ENCODE measurements at regions of chr1 and their contacts with region 1.

Region 1: GRCh38 chr1:244272471-244273261 is 179.0 kb downstream of the ADSS2 start:
- DNase-seq: peak; percentile 80
- ATAC-seq: peak; percentile 90
- H3K4me3 Mint-ChIP-seq: no peak overlapping the region
- H3K27ac Mint-ChIP-seq: no peak overlapping the region
- H3K4me1 Mint-ChIP-seq: peaks cover 9% of the 10 kb centered on the region
- H3K27me3 Mint-ChIP-seq: no peaks in the 10 kb centered on the region

Region 2: GRCh38 chr1:242467556-242468145 is 1805.0 kb before region 1 on chr1:
- CTCF ChIA-PET with region 1: no interaction called
- POLR2A ChIA-PET with region 1: no interaction called
- intact Hi-C with region 1: loop called in 1 of 2 experiments (anchors 5 kb)
- DNase-seq: peak; percentile 44
- ATAC-seq: peak; percentile 49
- H3K4me3 Mint-ChIP-seq: no peak overlapping the region
- H3K27ac Mint-ChIP-seq: no peak overlapping the region
- H3K4me1 Mint-ChIP-seq: no peaks in the 10 kb centered on the region
- H3K27me3 Mint-ChIP-seq: peaks cover 6% of the 10 kb centered on the region

Region 3: GRCh38 chr1:243471754-243472745 is 800.6 kb before region 1 on chr1:
- CTCF ChIA-PET with region 1: no interaction called
- POLR2A ChIA-PET with region 1: no interaction called
- intact Hi-C with region 1: loop called in 1 of 2 experiments (anchors 10 kb)
- DNase-seq: no peak
- ATAC-seq: no peak
- H3K4me3 Mint-ChIP-seq: no peak overlapping the region
- H3K27ac Mint-ChIP-seq: no peak overlapping the region
- H3K4me1 Mint-ChIP-seq: peaks cover 10% of the 10 kb centered on the region
- H3K27me3 Mint-ChIP-seq: no peaks in the 10 kb centered on the region

Region 4: DNA sequence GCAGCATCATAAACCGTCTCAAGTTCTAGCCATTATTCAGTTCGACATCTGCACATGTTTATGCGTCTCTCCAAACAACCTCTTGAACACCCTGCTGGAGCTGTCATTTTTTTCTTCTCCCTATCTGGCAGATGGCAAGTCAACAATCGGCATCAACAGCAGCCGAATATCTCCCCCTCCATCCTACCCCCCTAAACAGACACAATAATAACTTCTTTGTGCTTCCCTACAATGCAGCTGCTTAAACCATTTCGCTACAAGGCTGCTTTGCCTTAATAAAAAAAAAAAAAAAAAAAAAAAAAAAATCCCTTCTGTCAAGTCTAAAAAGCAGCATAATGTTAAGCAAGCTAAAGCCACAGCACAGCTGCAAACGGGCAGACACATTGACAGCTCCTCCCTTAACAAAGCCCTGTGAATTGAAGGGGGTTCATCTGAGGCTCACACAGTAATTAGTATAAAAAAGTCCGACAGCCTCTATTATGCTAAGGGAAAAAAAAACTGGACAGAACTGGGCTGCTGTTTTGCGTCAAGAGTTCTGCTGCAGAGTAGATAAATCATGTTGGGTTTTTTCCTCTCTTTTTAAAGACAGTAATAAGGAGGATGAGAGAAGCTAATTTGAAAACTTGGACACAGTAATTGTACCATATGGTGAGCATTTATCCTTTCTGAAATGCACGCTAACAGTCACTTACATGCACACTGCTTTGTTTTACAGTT is 559.0 kb before region 1 on chr1:
- CTCF ChIA-PET with region 1: interaction called, 3 read pairs
- POLR2A ChIA-PET with region 1: no interaction called
- intact Hi-C with region 1: loop called (anchors 1 to 5 kb)
- DNase-seq: no peak
- ATAC-seq: no peak
- H3K4me3 Mint-ChIP-seq: no peak overlapping the region
- H3K27ac Mint-ChIP-seq: no peak overlapping the region
- H3K4me1 Mint-ChIP-seq: peaks cover 25% of the 10 kb centered on the region
- H3K27me3 Mint-ChIP-seq: no peaks in the 10 kb centered on the region

Region 5: DNA sequence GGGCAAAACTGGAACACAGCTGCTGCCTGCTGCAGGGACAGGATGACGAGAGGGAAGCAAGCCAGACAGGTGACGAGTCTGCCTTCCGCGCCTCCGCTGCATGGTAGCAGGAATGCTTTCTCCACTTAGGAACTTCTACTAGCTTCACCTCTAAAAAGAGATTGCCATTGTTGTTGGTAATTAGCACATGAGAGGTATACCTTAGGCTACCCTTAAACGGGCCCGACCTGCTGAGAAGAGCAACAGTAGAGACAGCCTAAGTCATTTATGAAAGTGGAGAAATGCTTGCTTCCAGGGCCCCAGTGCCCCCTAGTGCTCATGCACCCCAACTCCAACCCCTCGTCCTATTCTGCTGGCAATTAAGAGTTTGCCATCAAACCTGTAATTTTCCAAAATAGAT is 325.7 kb before region 1 on chr1:
- CTCF ChIA-PET with region 1: no interaction called
- POLR2A ChIA-PET with region 1: no interaction called
- intact Hi-C with region 1: loop called in 1 of 2 experiments (anchors 1 kb)
- DNase-seq: peak; percentile 65
- ATAC-seq: peak; percentile 74
- H3K4me3 Mint-ChIP-seq: no peak overlapping the region
- H3K27ac Mint-ChIP-seq: no peak overlapping the region
- H3K4me1 Mint-ChIP-seq: peaks cover under 1% of the 10 kb centered on the region
- H3K27me3 Mint-ChIP-seq: peaks cover under 1% of the 10 kb centered on the region

Region 6: GRCh38 chr1:244302889-244303613 is 30.4 kb after region 1 on chr1:
- CTCF ChIA-PET with region 1: interaction called, 5 read pairs
- POLR2A ChIA-PET with region 1: no interaction called
- intact Hi-C with region 1: loop called in 1 of 2 experiments (anchors 1 kb)
- DNase-seq: no peak
- ATAC-seq: no peak
- H3K4me3 Mint-ChIP-seq: no peak overlapping the region
- H3K27ac Mint-ChIP-seq: no peak overlapping the region
- H3K4me1 Mint-ChIP-seq: peaks cover 11% of the 10 kb centered on the region
- H3K27me3 Mint-ChIP-seq: no peaks in the 10 kb centered on the region